ENCODE measurements at regions of chrX and their contacts with region 1.

Region 1: GRCh38 chrX:101260431-101260830 is 30.7 kb downstream of the TAF7L start:
- DNase-seq: peak; percentile 42 to 46 (median 46)
- ATAC-seq: peak; percentile 95
- H3K4me3 ChIP-seq: no peak overlapping the region
- H3K27ac ChIP-seq: no peak overlapping the region
- H3K4me1 ChIP-seq: no peaks in the 10 kb centered on the region
- H3K27me3 ChIP-seq: no peaks in the 10 kb centered on the region; a peak in 1 of 5 replicates
- CTCF ChIP-seq: peak; percentile 50 to 73 (median 71)
- EP300 ChIP-seq: no peak
- POLR2A ChIP-seq: no peak
- RAD21 ChIP-seq: peak; percentile 50 to 73

Region 2: DNA sequence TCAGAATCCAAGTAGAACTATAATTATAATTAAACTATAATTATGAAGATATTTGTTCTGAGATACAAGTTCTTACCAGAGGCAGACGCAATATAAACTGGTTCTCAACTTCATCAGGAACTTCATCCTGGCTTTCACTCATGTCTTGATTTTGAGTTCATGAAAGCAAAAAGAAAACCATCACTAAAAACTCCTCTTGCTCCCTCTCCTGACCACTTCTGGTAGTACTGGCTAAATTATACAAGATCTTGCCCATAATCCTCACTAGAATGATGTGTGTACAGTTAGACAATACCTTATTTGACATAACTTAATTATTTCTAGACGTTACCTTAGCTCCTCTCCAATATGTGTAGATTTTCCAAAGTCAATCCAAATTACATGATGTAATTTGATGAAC is 27.0 kb after region 1 on chrX:
- CTCF ChIA-PET with region 1: no interaction called
- POLR2A ChIA-PET with region 1: no interaction called
- in situ Hi-C with region 1: no loop called
- intact Hi-C with region 1: loop called (anchors 1 kb)
- DNase-seq: peak; percentile 13 to 49 (median 20)
- ATAC-seq: peak; percentile 81
- H3K4me3 ChIP-seq: no peak overlapping the region
- H3K27ac ChIP-seq: no peak overlapping the region
- H3K4me1 ChIP-seq: no peaks in the 10 kb centered on the region
- H3K27me3 ChIP-seq: no peaks in the 10 kb centered on the region; a peak in 1 of 5 replicates
- CTCF ChIP-seq: peak; percentile 39 to 60 (median 51); a peak in 4 of 6 replicates
- EP300 ChIP-seq: no peak
- POLR2A ChIP-seq: no peak
- RAD21 ChIP-seq: peak; percentile 20 to 69; a peak in 3 of 4 replicates

Region 3: DNA sequence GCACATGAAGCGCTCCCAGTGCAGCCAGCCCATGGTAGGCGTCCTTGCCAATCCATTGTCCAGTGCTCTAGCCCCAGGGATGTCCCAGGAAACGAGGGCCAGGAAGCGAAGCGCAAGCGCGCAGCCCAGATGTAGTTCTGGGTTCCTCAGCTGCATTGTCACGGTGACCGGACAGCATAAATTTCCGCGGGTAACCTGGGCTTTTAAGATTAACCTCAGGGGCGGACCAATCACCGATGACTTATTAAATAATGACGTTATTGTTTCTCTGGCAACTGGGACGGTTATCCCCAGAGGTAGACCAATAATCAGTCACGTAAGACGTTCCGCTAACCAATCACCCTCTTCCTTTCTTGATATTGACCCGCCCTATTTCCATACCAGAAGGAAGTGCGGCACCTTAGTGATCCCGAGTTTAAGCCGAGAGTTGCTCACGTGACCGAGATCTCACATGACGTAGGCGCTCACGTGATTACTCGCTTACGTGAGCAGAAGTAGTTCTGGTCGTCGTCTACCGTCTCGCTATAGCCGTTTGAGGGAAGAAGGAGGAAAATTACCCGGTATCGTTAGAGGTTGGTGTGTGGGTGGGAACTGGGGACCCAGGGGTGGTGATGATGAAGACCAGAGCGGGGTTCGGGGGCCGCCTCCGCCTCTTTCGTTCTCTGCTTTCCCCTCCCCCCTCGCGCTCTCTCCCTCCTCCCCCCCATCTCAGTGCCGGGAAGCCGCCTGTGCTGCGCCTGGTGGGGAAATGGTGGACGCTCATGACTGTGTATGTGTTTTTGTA is 147.5 kb after region 1 on chrX and contains the starts of genes GLA and HNRNPH2:
- CTCF ChIA-PET with region 1: no interaction called
- POLR2A ChIA-PET with region 1: no interaction called
- in situ Hi-C with region 1: no loop called
- intact Hi-C with region 1: loop called (anchors 2 kb)
- DNase-seq: peak; percentile 88 to 96 (median 92)
- ATAC-seq: peak; percentile 93
- H3K4me3 ChIP-seq: peak within 1 kb of the TSS; percentile 71
- H3K27ac ChIP-seq: peak within 1 kb of the TSS; percentile 97
- H3K4me1 ChIP-seq: no peaks in the 10 kb centered on the region; a peak in 1 of 5 replicates
- H3K27me3 ChIP-seq: no peaks in the 10 kb centered on the region
- CTCF ChIP-seq: peak in 1 of 3 experiments; percentile 23; a peak in 1 of 6 replicates
- EP300 ChIP-seq: peak; percentile 37; the same call in 1 of the 2 replicates
- POLR2A ChIP-seq: peak; percentile 82
- RAD21 ChIP-seq: no peak
- polyA plus RNA-seq, gene GLA: 137 to 146 TPM
- polyA plus RNA-seq, gene HNRNPH2: 60.3 to 130 TPM

Region 4: DNA sequence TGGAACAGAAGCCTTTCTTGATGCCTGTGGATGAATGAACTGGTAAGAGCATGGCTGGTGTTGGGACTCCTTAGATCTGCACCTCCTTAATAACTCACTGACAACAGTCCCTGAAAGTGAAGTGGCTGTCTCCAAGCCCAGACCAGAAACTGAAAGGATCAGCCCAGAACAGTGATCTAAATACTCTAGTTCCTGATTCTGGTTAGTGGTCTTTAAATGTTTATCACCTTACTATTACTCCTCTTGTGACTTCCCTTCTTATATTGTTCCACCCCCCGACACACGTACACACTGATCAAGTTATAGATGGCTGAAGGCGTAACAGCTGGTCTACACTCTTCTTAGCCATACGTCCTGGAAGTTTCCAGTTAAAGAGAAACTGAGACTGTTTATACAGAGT is 433.0 kb after region 1 on chrX:
- CTCF ChIA-PET with region 1: no interaction called
- POLR2A ChIA-PET with region 1: no interaction called
- in situ Hi-C with region 1: no loop called
- intact Hi-C with region 1: no loop called
- DNase-seq: no peak
- ATAC-seq: no peak
- H3K4me3 ChIP-seq: no peak overlapping the region
- H3K27ac ChIP-seq: no peak overlapping the region
- H3K4me1 ChIP-seq: no peaks in the 10 kb centered on the region
- H3K27me3 ChIP-seq: no peaks in the 10 kb centered on the region
- CTCF ChIP-seq: no peak
- EP300 ChIP-seq: no peak
- POLR2A ChIP-seq: no peak
- RAD21 ChIP-seq: no peak